ENCODE measurements at regions of chr19 and their contacts with region 1.

Region 1: GRCh38 chr19:57578487-57579205 is at the start of gene ZNF416:
- DNase-seq: peak; percentile 98
- H3K4me3 ChIP-seq: peak within 1 kb of the TSS; percentile 67 to 99 (median 95)
- H3K27ac ChIP-seq: peak within 1 kb of the TSS; percentile 71 to 85 (median 74)
- H3K4me1 ChIP-seq: peaks cover 0 to 24% (median 14%) of the 10 kb centered on the region in 4 donors
- H3K27me3 ChIP-seq: no peaks in the 10 kb centered on the region
- CTCF ChIP-seq: no peak
- EP300 ChIP-seq: no peak
- POLR2A ChIP-seq: no peak
- total RNA-seq, gene ZNF416: 3.1 to 5.5 (median 4.2) TPM

Region 2: DNA sequence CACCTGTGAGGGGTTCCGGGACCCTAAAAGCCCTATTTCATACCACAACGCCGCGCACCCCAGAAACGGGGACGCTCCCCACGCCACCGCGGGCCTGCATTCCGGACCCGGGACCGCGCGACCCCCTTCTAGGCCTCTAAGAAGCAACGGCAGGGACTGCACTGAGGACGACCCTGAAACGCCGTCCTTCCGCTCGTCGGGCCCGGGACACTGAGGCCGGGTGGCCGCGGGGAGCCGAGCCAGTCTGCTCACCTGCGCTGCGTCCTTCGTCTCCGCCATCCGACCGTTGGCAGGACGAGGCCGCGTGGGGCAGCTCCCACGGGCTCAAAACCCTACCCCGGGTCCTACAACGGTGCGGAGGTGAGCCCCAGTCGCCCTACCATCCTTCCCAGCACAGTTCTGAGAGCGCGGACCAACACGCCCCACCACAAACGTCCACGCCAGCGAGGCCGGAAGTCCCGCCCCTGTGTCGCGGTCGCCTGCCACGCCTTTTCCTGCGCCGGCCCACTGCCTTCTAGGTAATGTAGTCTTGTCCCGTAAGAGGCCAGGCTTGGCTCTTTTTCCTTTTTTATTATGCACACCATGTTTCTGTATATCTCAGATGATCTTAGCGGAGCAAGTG is 19.1 kb before region 1 on chr19 and contains the start of gene ZNF550:
- intact Hi-C with region 1: loop called (anchors 2 kb)
- DNase-seq: peak; percentile 94
- H3K4me3 ChIP-seq: peak within 1 kb of the TSS; percentile 59 to 92 (median 88)
- H3K27ac ChIP-seq: peak within 1 kb of the TSS; percentile 68 to 78 (median 72)
- H3K4me1 ChIP-seq: peaks cover 0 to 20% (median 16%) of the 10 kb centered on the region in 4 donors
- H3K27me3 ChIP-seq: no peaks in the 10 kb centered on the region
- CTCF ChIP-seq: no peak
- EP300 ChIP-seq: no peak
- POLR2A ChIP-seq: peak; percentile 34 to 35
- total RNA-seq, gene ZNF550: 4.1 to 6.6 (median 5.0) TPM

Region 3: DNA sequence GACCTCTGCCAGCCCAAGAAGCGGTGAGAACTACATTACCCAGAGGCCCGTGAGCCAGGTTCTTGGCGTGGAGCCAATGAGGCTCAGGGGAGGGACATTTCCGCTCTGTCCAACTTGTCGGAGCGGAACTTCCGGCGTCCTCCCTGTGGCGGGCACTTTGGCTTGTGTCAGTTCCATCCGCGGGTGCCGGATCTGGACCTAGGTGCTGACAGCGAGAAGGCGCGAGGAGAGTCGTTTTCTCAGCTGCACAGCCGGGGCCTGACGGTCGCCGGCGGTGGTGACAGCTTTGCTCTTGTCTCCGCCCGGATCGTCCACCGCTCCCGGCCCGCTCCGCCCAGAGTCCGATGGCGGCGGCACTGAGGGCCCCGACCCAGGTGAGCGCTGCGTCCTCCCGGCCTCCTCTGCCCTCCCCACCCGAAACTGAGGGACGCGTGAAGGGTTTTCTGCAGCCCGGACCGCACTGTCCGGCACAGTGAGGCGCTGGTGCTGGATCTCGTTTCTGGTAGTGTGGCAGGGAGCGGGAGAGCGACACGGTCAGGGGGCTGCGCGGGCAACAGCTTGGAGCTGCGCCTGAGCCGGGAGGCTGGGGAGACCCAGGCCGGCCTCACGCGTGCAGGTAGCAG is 21.2 kb after region 1 on chr19 and contains the start of gene ZNF530:
- intact Hi-C with region 1: loop called (anchors 2 kb)
- DNase-seq: peak; percentile 97
- H3K4me3 ChIP-seq: peak within 1 kb of the TSS; percentile 68 to 88 (median 70)
- H3K27ac ChIP-seq: peak within 1 kb of the TSS in 3 of 4 donors; percentile 50 to 57 (median 55)
- H3K4me1 ChIP-seq: peaks cover 0 to 13% (median 9%) of the 10 kb centered on the region in 4 donors
- H3K27me3 ChIP-seq: no peaks in the 10 kb centered on the region
- CTCF ChIP-seq: no peak
- EP300 ChIP-seq: no peak
- POLR2A ChIP-seq: no peak
- total RNA-seq, gene ZNF530: 1.2 to 12.5 (median 3.1) TPM

Region 4: GRCh38 chr19:57611113-57611512 is 32.5 kb after region 1 on chr19:
- intact Hi-C with region 1: no loop called
- DNase-seq: no peak
- H3K4me3 ChIP-seq: no peak overlapping the region
- H3K27ac ChIP-seq: no peak overlapping the region
- H3K4me1 ChIP-seq: peaks cover 0 to 16% (median 11%) of the 10 kb centered on the region in 4 donors
- H3K27me3 ChIP-seq: no peaks in the 10 kb centered on the region
- CTCF ChIP-seq: no peak
- EP300 ChIP-seq: no peak
- POLR2A ChIP-seq: no peak

Region 5: GRCh38 chr19:57914531-57914930 is 335.9 kb after region 1 on chr19:
- intact Hi-C with region 1: loop called (anchors 2 kb)
- DNase-seq: no peak
- H3K4me3 ChIP-seq: no peak overlapping the region
- H3K27ac ChIP-seq: no peak overlapping the region
- H3K4me1 ChIP-seq: peaks cover 0 to 19% (median 11%) of the 10 kb centered on the region in 4 donors
- H3K27me3 ChIP-seq: no peaks in the 10 kb centered on the region
- CTCF ChIP-seq: no peak
- EP300 ChIP-seq: no peak
- POLR2A ChIP-seq: no peak

Measured in sigmoid colon (tissue), 7 donors.